Activated CD4-positive, alpha-beta T cell treated with anti-CD3 and anti-CD28 coated beads, Interleukin-2, amount 10 ng/mL, durations not matched to agents 7 days and 5 days (primary cell): ENCODE measurements at regions of chr1 and their contacts with region 1.

Region 1: GRCh38 chr1:92577261-92577895 is 90.7 kb upstream of the GFI1 start:
- DNase-seq: no peak
- H3K4me3 Mint-ChIP-seq: peak overlapping the region; percentile 35
- H3K27ac Mint-ChIP-seq: peak overlapping the region; percentile 76
- H3K4me1 Mint-ChIP-seq: peaks cover 77% of the 10 kb centered on the region
- H3K27me3 Mint-ChIP-seq: no peaks in the 10 kb centered on the region

Region 2: GRCh38 chr1:92563457-92564216 is 13.7 kb before region 1 on chr1:
- CTCF ChIA-PET with region 1: interaction called, 12 read pairs
- POLR2A ChIA-PET with region 1: no interaction called
- DNase-seq: no peak
- H3K4me3 Mint-ChIP-seq: no peak overlapping the region
- H3K27ac Mint-ChIP-seq: no peak overlapping the region
- H3K4me1 Mint-ChIP-seq: peaks cover 36% of the 10 kb centered on the region
- H3K27me3 Mint-ChIP-seq: no peaks in the 10 kb centered on the region